Posterior cingulate gyrus (tissue), 11 donors: ENCODE measurements at regions of chr2 and their contacts with region 1.

Region 1: GRCh38 chr2:163610817-163611556 is 124.8 kb downstream of the FIGN start:
- DNase-seq: peak in 7 of 10 donors; percentile 14 to 86 (median 43)

Region 2: DNA sequence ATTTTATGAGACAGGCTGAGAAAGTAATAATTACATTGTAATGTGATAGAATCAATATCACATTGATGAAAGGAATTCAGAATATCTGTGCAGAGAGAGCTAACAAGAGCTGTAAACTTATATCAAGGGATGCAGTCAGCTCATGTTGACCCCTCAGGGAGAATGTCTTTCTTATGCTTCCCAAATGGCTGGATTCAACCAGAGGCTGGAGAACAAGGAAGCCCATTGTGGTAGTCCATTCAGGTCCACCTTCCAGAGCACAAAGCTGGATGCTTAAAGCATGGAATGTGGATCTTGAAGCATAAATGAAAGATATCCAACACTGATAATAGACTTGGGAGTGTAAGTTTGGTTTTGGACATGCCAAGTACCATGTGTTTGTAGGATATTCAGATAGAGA is 95.2 kb before region 1 on chr2:
- intact Hi-C with region 1: no loop called
- DNase-seq: no peak

Region 3: GRCh38 chr2:163735685-163736432 is 124.9 kb after region 1 on chr2 and contains the start of gene FIGN:
- intact Hi-C with region 1: loop called (anchors 5 kb)
- DNase-seq: peak; percentile 69 to 97 (median 76)